Left ventricle myocardium superior (tissue), 1 donor: ENCODE measurements at regions of chr9 and their contacts with region 1.

Region 1: DNA sequence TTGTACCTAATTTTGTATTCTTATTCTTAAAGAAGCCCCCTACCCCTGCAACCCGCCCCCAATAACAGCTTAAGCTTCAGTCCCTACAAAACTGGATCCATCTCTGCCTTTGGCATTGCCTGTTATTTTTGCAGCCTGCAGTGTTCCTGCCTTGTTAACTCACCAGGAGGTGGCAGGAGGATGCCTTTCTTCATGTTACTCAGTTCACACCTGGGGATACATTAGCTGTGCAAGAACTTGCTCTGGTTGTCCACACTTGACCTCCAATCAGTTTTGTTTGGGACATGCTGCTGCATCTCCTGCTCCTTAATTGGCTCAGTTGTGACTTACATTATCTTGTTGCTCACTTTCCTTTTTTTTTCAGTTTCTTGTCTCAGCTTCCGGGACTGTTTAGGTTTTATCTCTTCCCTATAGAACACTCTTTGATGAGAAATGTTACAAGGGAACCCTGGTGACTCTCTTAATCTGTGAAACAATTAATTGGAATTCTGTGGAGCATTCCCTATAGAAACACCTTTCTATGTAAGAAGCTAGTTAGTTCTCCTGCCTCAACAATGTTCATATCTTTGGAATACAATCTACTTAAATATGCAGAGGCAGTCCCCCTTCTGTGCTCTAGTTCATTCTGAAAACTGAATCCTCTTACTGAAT is 467.7 kb upstream of the ACO1 start:
- DNase-seq: no peak
- ATAC-seq: no peak

Region 2: GRCh38 chr9:31854187-31854586 is 62.5 kb before region 1 on chr9:
- intact Hi-C with region 1: loop called (anchors 10 kb)
- DNase-seq: no peak
- ATAC-seq: no peak

Region 3: DNA sequence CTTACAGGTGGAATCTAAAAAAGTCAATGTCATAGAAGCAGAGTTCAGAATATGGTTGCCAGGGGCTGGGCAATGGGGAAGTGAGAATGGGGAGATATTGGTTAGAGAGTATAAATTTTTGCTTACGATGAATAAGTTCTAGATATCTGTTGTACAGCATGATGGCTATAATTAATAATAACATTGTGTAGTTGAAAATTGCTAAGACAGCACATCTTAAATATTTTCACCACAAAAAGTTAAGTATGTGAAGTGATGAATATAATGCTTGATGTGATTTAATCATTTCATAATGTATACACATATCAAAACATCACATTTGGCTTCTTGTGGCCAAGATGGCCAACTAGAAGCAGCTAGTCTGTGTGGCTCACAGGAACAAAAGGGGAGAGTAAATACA is 41.9 kb after region 1 on chr9:
- intact Hi-C with region 1: no loop called
- DNase-seq: no peak
- ATAC-seq: no peak